Endothelial cell of umbilical vein (primary cell): ENCODE measurements at regions of chr5 and their contacts with region 1.

Region 1: DNA sequence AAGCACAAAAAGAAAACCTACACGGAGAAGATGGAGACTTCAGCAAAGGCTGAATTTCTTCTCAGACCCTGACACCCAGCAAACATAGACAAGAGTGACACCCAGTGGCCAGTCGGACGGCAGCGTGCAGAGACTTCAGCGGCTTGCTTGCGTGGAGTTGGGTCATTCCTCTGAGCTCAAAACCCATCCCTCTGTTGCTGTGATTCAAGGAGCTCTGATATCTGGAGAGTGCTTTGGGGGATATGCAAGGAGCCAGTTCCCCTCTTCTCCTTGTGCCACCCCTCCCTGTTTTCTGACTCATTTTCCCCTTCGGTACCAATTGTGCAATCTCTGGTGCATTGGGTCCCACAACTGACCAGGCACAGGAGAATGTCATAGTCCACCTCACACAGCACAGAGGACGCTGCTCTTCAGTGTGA is 27.5 kb downstream of the SH3TC2 start:
- DNase-seq: peak; percentile 73
- H3K4me3 ChIP-seq: no peak overlapping the region
- H3K27ac ChIP-seq: no peak overlapping the region
- H3K4me1 ChIP-seq: peaks cover 39% of the 10 kb centered on the region
- H3K27me3 ChIP-seq: no peaks in the 10 kb centered on the region
- CTCF ChIP-seq: peak; percentile 87 to 88
- POLR2A ChIP-seq: no peak

Region 2: GRCh38 chr5:148186248-148186996 is 849.0 kb before region 1 on chr5:
- CTCF ChIA-PET with region 1: no interaction called
- POLR2A ChIA-PET with region 1: no interaction called
- dilution Hi-C with region 1: no loop called
- intact Hi-C with region 1: loop called (anchors 5 kb)
- DNase-seq: peak; percentile 84
- H3K4me3 ChIP-seq: no peak overlapping the region
- H3K27ac ChIP-seq: peak overlapping the region; percentile 18
- H3K4me1 ChIP-seq: peaks cover 22% of the 10 kb centered on the region
- H3K27me3 ChIP-seq: no peaks in the 10 kb centered on the region
- CTCF ChIP-seq: no peak
- POLR2A ChIP-seq: no peak

Region 3: GRCh38 chr5:148746826-148747535 is 288.4 kb before region 1 on chr5:
- CTCF ChIA-PET with region 1: interaction called, 176 read pairs
- POLR2A ChIA-PET with region 1: no interaction called
- dilution Hi-C with region 1: no loop called
- intact Hi-C with region 1: no loop called
- DNase-seq: peak; percentile 45
- H3K4me3 ChIP-seq: no peak overlapping the region
- H3K27ac ChIP-seq: no peak overlapping the region
- H3K4me1 ChIP-seq: no peaks in the 10 kb centered on the region
- H3K27me3 ChIP-seq: no peaks in the 10 kb centered on the region
- CTCF ChIP-seq: no peak
- POLR2A ChIP-seq: no peak

Region 4: DNA sequence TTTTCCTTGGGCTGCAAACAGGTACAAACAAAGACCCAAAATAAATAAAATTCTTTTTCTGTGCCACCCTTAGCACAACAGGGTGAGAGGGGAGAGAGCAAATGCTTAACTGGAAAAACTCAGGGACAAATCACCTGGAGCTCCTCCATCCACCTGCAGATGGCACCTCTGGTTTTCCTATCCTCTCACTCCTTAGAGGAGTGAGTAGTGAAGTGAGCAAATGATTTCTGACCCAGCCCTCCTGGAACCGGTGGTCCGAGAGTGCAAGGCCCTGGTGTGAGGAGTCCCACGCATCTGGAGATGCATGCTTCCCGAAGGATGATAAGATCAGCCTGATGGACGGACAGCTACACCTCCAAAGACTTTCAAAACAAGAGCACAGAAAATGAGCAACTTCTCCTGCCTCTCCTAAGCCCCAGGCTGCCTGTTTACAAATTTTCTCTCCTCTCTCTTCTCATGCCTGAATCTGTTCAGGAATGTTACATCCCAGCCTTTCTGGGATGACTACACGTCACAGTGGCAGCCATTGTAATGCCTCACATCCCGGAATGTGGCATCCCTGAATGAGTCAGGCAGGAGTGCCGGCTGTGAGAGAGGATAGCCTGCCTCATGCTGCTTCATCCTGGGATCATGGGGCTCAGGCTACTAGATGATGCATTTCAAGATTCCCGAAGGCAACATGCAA is 122.5 kb before region 1 on chr5:
- CTCF ChIA-PET with region 1: interaction called, 8 read pairs
- POLR2A ChIA-PET with region 1: no interaction called
- dilution Hi-C with region 1: no loop called
- intact Hi-C with region 1: loop called (anchors 2 kb)
- DNase-seq: peak; percentile 79
- H3K4me3 ChIP-seq: no peak overlapping the region
- H3K27ac ChIP-seq: peak overlapping the region; percentile 96
- H3K4me1 ChIP-seq: peaks cover 55% of the 10 kb centered on the region
- H3K27me3 ChIP-seq: no peaks in the 10 kb centered on the region
- CTCF ChIP-seq: peak in 1 of 2 donors; percentile 4
- POLR2A ChIP-seq: no peak

Region 5: GRCh38 chr5:148979104-148979723 is 56.2 kb before region 1 on chr5:
- CTCF ChIA-PET with region 1: interaction called, 12 read pairs
- POLR2A ChIA-PET with region 1: no interaction called
- dilution Hi-C with region 1: no loop called
- intact Hi-C with region 1: no loop called
- DNase-seq: no peak
- H3K4me3 ChIP-seq: no peak overlapping the region
- H3K27ac ChIP-seq: no peak overlapping the region
- H3K4me1 ChIP-seq: peaks cover 28% of the 10 kb centered on the region
- H3K27me3 ChIP-seq: no peaks in the 10 kb centered on the region
- CTCF ChIP-seq: no peak
- POLR2A ChIP-seq: no peak

Region 6: DNA sequence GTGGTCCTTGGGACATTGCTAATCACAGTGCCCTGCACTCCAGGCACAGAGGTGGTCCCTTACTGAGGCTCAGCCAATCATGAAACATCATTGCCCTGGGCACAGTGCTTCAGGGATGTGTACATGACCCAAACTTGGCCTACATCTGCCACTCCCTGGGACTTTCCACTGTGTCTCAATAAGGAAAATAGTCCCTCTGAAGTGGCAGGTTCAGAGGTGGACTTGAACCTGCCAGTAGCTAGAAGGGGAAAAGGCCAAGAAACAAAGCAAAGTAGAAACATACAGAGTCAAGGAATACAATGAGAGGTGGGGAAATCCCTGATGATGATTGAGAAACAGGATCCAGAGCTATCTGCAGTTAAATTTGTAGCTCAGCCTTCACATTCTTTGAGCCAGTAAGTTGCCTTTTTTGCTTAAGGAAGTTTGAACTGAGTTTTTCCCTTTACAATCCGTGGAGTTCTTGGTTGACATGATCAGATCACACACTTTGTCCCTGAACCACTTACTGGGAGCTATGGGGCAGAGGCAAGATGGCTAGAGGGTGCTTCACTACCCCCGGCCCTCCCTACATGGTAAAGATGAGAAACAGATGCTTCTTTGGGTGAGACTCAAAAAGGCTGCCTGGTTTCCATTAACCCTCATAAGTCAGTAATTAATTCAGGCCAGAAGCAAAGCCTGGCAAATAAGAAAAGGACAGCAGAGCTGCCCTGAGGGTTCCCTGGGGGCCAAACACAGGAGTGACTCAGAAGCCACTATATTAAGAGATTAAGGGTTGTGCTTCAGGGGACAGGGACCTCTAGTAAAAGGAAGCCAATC is 30.1 kb before region 1 on chr5:
- CTCF ChIA-PET with region 1: interaction called, 69 read pairs
- POLR2A ChIA-PET with region 1: no interaction called
- dilution Hi-C with region 1: no loop called
- intact Hi-C with region 1: loop called (anchors 1 kb)
- DNase-seq: no peak
- H3K4me3 ChIP-seq: no peak overlapping the region
- H3K27ac ChIP-seq: no peak overlapping the region
- H3K4me1 ChIP-seq: peaks cover 7% of the 10 kb centered on the region
- H3K27me3 ChIP-seq: no peaks in the 10 kb centered on the region
- CTCF ChIP-seq: no peak
- POLR2A ChIP-seq: no peak

Region 7: DNA sequence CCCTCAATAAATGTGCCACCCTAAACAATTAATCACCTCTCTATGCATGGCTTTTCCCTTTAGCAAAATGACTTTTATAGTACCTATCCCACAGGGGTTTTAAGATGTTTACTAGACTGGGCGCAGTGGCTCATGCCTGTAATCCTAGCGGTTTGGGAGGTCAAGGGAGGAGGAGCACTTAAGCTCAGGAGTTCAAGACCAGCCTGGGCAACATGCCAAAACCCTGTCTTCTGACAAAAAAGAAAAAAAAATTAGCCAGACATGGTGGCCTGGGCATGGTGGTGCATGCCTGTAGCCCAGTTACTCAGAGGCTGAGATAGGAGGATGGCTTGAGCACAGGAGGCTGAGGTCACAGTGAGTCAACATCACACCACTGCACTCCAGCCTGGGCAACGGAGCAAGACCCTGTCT is 14.0 kb after region 1 on chr5:
- CTCF ChIA-PET with region 1: interaction called, 24 read pairs
- POLR2A ChIA-PET with region 1: no interaction called
- dilution Hi-C with region 1: no loop called
- intact Hi-C with region 1: no loop called
- DNase-seq: no peak
- H3K4me3 ChIP-seq: no peak overlapping the region
- H3K27ac ChIP-seq: no peak overlapping the region
- H3K4me1 ChIP-seq: peaks cover 12% of the 10 kb centered on the region
- H3K27me3 ChIP-seq: no peaks in the 10 kb centered on the region
- CTCF ChIP-seq: no peak
- POLR2A ChIP-seq: no peak

Region 8: GRCh38 chr5:149219584-149219983 is 184.2 kb after region 1 on chr5:
- CTCF ChIA-PET with region 1: no interaction called
- POLR2A ChIA-PET with region 1: no interaction called
- dilution Hi-C with region 1: no loop called
- intact Hi-C with region 1: no loop called
- DNase-seq: no peak
- H3K4me3 ChIP-seq: no peak overlapping the region
- H3K27ac ChIP-seq: no peak overlapping the region
- H3K4me1 ChIP-seq: peaks cover 10% of the 10 kb centered on the region
- H3K27me3 ChIP-seq: no peaks in the 10 kb centered on the region
- CTCF ChIP-seq: no peak
- POLR2A ChIP-seq: no peak

Region 9: GRCh38 chr5:150511578-150512367 is 1476.4 kb after region 1 on chr5:
- CTCF ChIA-PET with region 1: no interaction called
- POLR2A ChIA-PET with region 1: no interaction called
- dilution Hi-C with region 1: no loop called
- intact Hi-C with region 1: no loop called
- DNase-seq: no peak
- H3K4me3 ChIP-seq: no peak overlapping the region
- H3K27ac ChIP-seq: no peak overlapping the region
- H3K4me1 ChIP-seq: peaks cover 48% of the 10 kb centered on the region
- H3K27me3 ChIP-seq: no peaks in the 10 kb centered on the region
- CTCF ChIP-seq: no peak
- POLR2A ChIP-seq: no peak